ENCODE measurements at regions of chr17 and their contacts with region 1.

Region 1: GRCh38 chr17:41932816-41933389 is 2.5 kb downstream of the ODAD4 start:
- DNase-seq: no peak
- H3K4me3 ChIP-seq: no peak overlapping the region
- H3K27me3 ChIP-seq: no peaks in the 10 kb centered on the region
- CTCF ChIP-seq: no peak

Region 2: GRCh38 chr17:41777574-41778188 is 155.2 kb before region 1 on chr17:
- CTCF ChIA-PET with region 1: no interaction called
- POLR2A ChIA-PET with region 1: no interaction called
- DNase-seq: peak; percentile 66
- H3K4me3 ChIP-seq: no peak overlapping the region
- H3K27me3 ChIP-seq: no peaks in the 10 kb centered on the region
- CTCF ChIP-seq: no peak

Region 3: DNA sequence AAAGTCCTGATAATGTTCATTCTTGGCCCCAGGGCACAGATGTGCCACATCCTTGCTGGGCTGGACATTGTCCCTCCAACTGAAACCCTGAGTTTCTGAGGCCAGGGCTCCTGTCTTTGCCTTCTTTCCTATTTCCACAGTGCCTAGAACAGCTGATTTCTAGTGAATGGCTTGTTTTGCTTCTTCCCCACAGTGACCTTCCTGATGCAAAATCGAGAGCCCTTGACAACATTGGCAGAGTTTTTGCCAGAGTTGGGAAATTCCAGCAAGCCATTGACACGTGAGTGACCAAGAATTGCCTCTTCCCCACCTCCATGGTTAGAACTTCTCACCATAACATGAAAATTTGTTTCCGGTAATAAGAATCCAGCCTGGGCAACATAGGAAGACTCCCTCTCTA is 12.0 kb after region 1 on chr17:
- CTCF ChIA-PET with region 1: interaction called, 3 read pairs
- POLR2A ChIA-PET with region 1: interaction called, 16 read pairs
- DNase-seq: no peak
- H3K4me3 ChIP-seq: no peak overlapping the region
- H3K27me3 ChIP-seq: no peaks in the 10 kb centered on the region
- CTCF ChIP-seq: no peak